T-cell (primary cell): ENCODE measurements at regions of chr10 and their contacts with region 1.

Region 1: GRCh38 chr10:104317195-104317767 is 21.0 kb downstream of the ITPRIP start:
- DNase-seq: peak in 1 of 35 experiments; percentile 18
- ATAC-seq: no peak
- H3K4me3 ChIP-seq: no peak overlapping the region
- H3K4me3 Mint-ChIP-seq: no peak overlapping the region
- H3K27ac ChIP-seq: no peak overlapping the region
- H3K27ac Mint-ChIP-seq: peak overlapping the region; percentile 12 to 58
- H3K4me1 ChIP-seq: peaks cover 38 to 43% of the 10 kb centered on the region in 2 experiments
- H3K4me1 Mint-ChIP-seq: peaks cover 59 to 61% (median 61%) of the 10 kb centered on the region in 3 donors
- H3K27me3 ChIP-seq: no peaks in the 10 kb centered on the region
- H3K27me3 Mint-ChIP-seq: no peaks in the 10 kb centered on the region

Region 2: DNA sequence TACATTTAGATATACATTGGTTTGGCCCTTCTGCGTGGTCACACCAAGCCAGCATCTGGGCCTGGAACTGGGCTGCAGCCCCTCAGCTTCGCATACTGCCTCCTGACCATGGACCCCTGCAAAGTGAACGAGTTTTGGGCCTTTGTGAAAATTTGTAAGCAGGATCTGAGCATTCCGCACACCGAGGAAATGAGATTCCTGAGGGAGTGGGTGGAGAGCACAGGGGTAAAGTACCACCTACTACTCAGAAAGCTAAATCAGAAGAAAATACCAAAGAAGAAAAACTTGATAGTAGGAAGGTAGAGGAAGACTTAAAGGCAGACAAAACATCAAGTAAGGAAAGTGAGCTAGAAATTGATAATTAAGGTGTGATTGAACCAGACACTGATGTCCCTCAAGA is 1101.7 kb before region 1 on chr10:
- CTCF ChIA-PET with region 1: no interaction called
- POLR2A ChIA-PET with region 1: no interaction called
- DNase-seq: no peak
- ATAC-seq: no peak
- H3K4me3 ChIP-seq: no peak overlapping the region
- H3K4me3 Mint-ChIP-seq: no peak overlapping the region
- H3K27ac ChIP-seq: no peak overlapping the region
- H3K27ac Mint-ChIP-seq: no peak overlapping the region
- H3K4me1 ChIP-seq: no peaks in the 10 kb centered on the region
- H3K4me1 Mint-ChIP-seq: no peaks in the 10 kb centered on the region
- H3K27me3 ChIP-seq: peaks cover 0 to 5% of the 10 kb centered on the region in 2 experiments
- H3K27me3 Mint-ChIP-seq: no peaks in the 10 kb centered on the region

Region 3: DNA sequence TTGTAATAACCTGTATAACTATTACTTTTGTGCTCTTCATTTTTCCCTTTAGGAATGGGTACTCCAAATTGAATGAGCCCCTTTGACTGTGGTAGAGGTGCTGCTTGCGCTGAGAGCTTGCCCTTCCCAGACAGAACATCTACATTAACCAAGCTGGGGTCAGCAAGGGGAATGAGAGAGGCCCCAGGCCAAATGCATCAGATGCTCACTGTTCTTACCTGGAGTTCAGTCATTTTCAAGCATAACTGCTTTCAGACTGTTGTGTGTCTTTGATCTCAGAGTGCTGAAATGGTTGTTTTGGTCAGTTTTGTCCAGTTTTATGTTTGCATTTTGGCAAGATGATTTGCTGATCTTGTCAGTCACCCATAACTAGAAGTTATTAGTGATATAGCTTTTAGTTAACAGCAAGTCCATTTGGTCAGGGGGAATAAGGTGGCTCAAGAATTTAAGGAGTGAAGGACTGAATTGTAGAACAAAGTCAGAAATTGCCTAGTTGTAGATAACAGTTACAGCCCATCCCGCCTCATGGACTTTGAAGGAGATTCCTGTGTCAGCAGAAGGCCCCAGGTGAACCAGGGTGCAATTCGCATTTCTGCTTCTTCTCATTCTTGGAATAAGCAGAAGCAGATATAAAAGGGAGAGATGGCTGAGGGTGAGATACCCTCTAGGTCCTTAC is 391.5 kb before region 1 on chr10:
- CTCF ChIA-PET with region 1: no interaction called
- POLR2A ChIA-PET with region 1: interaction called in 1 of 2 experiments, 14 read pairs
- DNase-seq: no peak
- ATAC-seq: no peak
- H3K4me3 ChIP-seq: no peak overlapping the region
- H3K4me3 Mint-ChIP-seq: no peak overlapping the region
- H3K27ac ChIP-seq: no peak overlapping the region
- H3K27ac Mint-ChIP-seq: no peak overlapping the region
- H3K4me1 ChIP-seq: peaks cover 4 to 5% of the 10 kb centered on the region in 2 experiments
- H3K4me1 Mint-ChIP-seq: peaks cover 0 to 5% (median 4%) of the 10 kb centered on the region in 3 donors
- H3K27me3 ChIP-seq: no peaks in the 10 kb centered on the region
- H3K27me3 Mint-ChIP-seq: peaks cover 0 to 3% of the 10 kb centered on the region in 2 donors